A549 (cell line): ENCODE measurements at regions of chr17 and their contacts with region 1.

Region 1: DNA sequence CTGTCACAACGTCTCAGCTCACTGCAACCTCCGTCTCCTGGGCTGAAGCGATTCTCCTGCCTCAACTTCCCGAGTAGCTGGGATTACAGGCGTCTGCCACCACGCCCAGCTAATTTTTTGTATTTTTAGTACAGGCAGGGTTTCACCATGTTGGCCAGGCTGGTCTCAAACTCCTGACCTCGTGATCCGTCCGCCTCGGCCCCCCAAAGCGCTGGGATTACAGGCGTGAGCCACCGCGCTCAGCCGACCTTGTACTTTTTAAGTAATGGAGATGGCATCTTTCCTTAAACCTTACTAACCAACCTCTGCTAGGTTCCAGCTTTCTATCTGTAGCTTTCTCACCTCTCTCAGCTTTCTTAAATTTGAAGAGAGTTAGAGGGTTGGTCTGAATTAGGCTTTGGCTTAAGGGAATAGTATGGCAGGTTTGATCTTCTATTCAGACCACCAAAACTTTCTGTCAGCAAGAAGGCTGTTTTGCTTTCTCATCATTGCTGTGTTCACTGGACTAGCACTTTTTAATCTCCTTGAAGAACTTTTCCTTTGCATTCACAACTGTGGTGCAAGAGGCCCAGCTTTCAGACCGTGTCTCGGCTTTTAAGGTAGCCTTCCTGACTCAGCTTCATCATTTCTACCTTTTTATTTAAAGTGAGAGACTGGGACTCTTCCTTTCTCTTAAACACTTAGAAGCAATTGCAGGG is 28.0 kb downstream of the YWHAE start:
- DNase-seq: no peak
- ATAC-seq: no peak
- H3K4me3 ChIP-seq: no peak overlapping the region
- H3K27ac ChIP-seq: no peak overlapping the region
- H3K4me1 ChIP-seq: peaks cover 43% of the 10 kb centered on the region
- CTCF ChIP-seq: no peak
- EP300 ChIP-seq: no peak
- POLR2A ChIP-seq: no peak
- RAD21 ChIP-seq: no peak

Region 2: GRCh38 chr17:1384905-1385435 is 12.9 kb after region 1 on chr17:
- CTCF ChIA-PET with region 1: interaction called, 123 read pairs
- POLR2A ChIA-PET with region 1: no interaction called
- DNase-seq: no peak
- ATAC-seq: peak in 1 of 2 experiments; percentile 36; a peak in 1 of 6 replicates
- H3K4me3 ChIP-seq: no peak overlapping the region
- H3K27ac ChIP-seq: no peak overlapping the region
- H3K4me1 ChIP-seq: peaks cover 63% of the 10 kb centered on the region
- CTCF ChIP-seq: no peak
- EP300 ChIP-seq: no peak
- POLR2A ChIP-seq: no peak
- RAD21 ChIP-seq: no peak

Region 3: DNA sequence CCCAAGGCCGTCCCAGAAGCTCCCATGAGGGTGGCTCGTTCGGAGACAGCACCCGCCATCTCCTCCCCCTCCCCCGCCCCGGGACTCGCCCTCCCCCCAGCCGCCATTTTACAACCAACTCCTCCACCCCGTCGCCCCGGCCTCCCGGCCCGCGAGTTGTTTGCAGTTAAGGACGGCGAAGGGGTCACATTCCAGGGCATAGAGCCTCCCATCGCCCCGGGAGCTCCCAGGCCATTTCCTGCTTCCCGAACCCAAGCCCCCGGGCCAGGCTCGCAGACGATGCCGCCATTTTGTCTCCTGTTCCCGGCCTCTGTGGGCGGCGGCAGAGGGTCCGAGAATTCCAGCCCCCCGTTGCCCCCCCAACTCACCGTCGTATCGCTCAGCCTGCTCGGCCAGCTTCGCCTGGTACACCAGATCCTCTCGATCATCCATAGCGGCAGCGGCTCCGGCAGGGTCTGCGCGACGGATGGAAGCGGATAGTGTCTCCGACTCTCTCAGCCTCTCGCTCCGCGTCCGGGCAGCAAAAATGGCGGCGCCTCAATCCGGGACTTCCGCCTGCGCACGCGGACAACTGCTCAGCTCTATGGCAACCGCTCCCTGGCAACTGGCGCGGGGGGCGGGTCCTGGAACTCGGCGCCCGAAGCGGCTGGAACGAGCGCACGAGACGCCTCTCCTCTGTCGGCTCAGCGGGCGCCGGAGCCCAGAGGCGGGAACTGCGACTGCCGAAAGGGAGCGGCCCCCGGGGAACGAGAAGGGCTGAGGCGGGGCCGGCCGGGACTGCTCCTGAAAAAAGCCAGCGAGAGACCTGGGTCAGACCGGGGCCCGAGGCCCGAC is 27.9 kb after region 1 on chr17 and contains the start of gene YWHAE:
- CTCF ChIA-PET with region 1: interaction called, 24 read pairs
- POLR2A ChIA-PET with region 1: interaction called, 17 read pairs
- DNase-seq: peak; percentile 96 to 97
- ATAC-seq: peak; percentile 96 to 97
- H3K4me3 ChIP-seq: peak within 1 kb of the TSS; percentile 84
- H3K27ac ChIP-seq: peak within 1 kb of the TSS; percentile 94 to 98
- H3K4me1 ChIP-seq: peaks cover 21% of the 10 kb centered on the region
- CTCF ChIP-seq: no peak
- EP300 ChIP-seq: no peak
- POLR2A ChIP-seq: peak; percentile 95
- RAD21 ChIP-seq: no peak; a peak in 1 of 5 replicates
- polyA plus RNA-seq, gene YWHAE: 1,017 and 1,284 TPM in 2 replicates

Region 4: GRCh38 chr17:1447052-1447451 is 75.0 kb after region 1 on chr17:
- CTCF ChIA-PET with region 1: no interaction called
- POLR2A ChIA-PET with region 1: no interaction called
- DNase-seq: no peak
- ATAC-seq: no peak
- H3K4me3 ChIP-seq: no peak overlapping the region
- H3K27ac ChIP-seq: no peak overlapping the region
- H3K4me1 ChIP-seq: peaks cover 11% of the 10 kb centered on the region; the same call in 2 of the 3 replicates
- CTCF ChIP-seq: no peak
- EP300 ChIP-seq: no peak
- POLR2A ChIP-seq: no peak
- RAD21 ChIP-seq: no peak